Dendritic cell treated with granulocyte-macrophage colony-stimulating factor and Interleukin-4, amounts not matched to agents 40 ng/mL and 50 ng/mL, for 4 days (primary cell): ENCODE measurements at regions of chr15 and their contacts with region 1.

Region 1: GRCh38 chr15:31365655-31366127 is 39.1 kb downstream of the KLF13 start:
- H3K4me3 Mint-ChIP-seq: peak overlapping the region; percentile 32
- H3K27ac Mint-ChIP-seq: peak overlapping the region; percentile 31
- H3K4me1 Mint-ChIP-seq: peaks cover 100% of the 10 kb centered on the region
- H3K27me3 Mint-ChIP-seq: no peaks in the 10 kb centered on the region

Region 2: DNA sequence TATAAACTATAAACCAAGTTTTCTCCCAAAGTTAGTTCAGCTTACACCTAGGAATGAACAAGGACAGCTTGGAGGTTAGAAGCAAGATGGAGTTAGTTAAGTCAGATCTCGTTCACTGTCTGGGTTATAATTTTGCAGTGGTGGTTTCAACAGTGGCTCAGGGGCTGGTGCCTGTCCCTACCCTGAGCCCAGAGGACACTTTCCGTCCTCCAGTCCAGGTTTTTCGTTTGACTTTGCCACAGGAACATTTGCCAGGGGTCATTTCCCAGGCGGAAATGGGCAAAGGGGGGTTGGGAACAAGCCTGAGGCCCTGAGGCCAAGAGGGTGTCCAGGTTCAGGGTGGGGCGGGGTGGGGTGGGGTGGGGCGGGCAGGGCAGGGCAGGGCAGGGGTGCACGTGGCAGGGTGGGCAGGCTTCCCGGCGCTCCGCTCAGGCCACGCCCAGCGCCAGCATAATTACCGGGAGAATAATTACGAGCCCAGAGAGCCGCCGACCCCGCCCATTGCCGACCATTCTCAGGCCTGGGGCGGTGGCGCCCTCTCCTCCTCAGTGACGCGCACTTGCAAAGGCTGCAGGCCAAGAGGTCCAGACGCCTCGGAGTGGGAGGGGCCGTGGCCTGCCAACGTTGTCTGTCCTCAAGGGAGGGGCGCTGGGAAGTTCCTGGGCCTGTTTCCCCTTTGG is 31.3 kb after region 1 on chr15:
- intact Hi-C with region 1: loop called (anchors 5 kb)
- H3K4me3 Mint-ChIP-seq: peak overlapping the region; percentile 23
- H3K27ac Mint-ChIP-seq: peak overlapping the region; percentile 64
- H3K4me1 Mint-ChIP-seq: peaks cover 65% of the 10 kb centered on the region
- H3K27me3 Mint-ChIP-seq: peaks cover 27% of the 10 kb centered on the region

Region 3: GRCh38 chr15:31488426-31489204 is 122.9 kb after region 1 on chr15:
- intact Hi-C with region 1: loop called (anchors 10 kb)
- H3K4me3 Mint-ChIP-seq: no peak overlapping the region
- H3K27ac Mint-ChIP-seq: peak overlapping the region; percentile 15
- H3K4me1 Mint-ChIP-seq: peaks cover 25% of the 10 kb centered on the region
- H3K27me3 Mint-ChIP-seq: peaks cover 45% of the 10 kb centered on the region